ENCODE measurements at regions of chr7 and their contacts with region 1.

Region 1: DNA sequence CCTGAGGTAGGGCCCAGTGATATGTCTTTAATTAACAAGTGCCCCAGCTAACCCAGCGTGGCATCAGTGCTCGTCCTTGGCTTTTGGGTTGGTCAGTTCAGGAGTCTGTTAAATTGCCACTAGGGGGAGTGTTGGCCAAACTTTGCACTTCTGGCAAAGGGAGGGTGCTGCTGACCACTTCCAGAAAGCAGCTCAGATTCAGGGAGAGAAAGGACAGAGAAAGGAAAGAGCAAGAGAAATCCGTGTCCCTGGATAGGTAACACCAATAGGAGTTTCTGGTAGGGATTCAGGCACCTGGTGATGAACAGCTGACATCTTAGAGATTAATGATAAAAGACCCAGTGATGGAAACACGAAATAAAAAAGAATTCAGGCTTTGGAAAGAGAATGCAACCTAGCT is 243.1 kb upstream of the AOAH start:
- DNase-seq: peak; percentile 57 to 85
- H3K4me3 ChIP-seq: no peak overlapping the region
- H3K27ac ChIP-seq: no peak overlapping the region
- H3K4me1 ChIP-seq: peaks cover 32 to 57% (median 49%) of the 10 kb centered on the region in 4 donors
- H3K27me3 ChIP-seq: no peaks in the 10 kb centered on the region
- CTCF ChIP-seq: peak in 5 of 7 experiments; percentile 67 to 81 (median 74)
- EP300 ChIP-seq: no peak
- POLR2A ChIP-seq: no peak

Region 2: DNA sequence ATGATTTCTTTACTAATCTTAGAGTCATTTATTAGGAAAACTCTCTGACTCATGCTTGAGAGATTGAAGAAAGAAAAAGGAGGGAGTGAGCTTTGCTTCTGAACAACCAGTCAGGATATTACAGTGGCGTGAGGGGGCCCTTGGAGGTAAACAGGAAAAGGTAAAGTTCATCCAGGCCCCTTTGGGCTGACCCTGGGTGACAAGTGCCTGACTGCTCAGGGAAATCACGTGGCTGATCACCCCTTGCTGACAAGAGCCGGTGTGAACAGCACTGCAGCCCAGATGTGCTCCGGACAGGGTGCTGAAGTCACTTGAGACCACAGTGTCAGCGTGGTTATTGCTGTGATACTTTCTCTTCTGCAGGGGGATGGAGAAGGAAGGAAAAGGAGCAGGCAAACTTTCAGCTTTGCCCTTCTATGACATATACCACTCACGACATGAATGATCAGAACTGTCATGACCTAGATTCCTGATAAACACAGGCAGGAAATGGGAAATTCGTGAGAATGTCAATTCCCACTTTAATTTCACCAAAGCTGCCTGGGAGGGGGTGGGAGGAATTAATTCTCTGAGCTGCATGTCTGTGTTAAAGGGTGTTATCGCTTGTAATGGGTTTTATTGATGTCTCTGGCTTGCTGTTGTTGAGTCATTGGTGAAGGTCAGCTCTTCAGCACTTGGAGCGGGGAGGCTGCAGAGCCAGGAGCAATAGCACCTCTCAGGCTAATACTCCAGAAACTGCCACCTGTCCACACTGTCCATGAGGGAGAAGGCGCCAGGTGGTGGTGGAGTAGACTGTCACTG is 103.3 kb before region 1 on chr7:
- intact Hi-C with region 1: no loop called
- DNase-seq: peak in 1 of 2 donors; percentile 48
- H3K4me3 ChIP-seq: no peak overlapping the region
- H3K27ac ChIP-seq: no peak overlapping the region
- H3K4me1 ChIP-seq: no peaks in the 10 kb centered on the region
- H3K27me3 ChIP-seq: no peaks in the 10 kb centered on the region
- CTCF ChIP-seq: no peak
- EP300 ChIP-seq: no peak
- POLR2A ChIP-seq: no peak

Region 3: DNA sequence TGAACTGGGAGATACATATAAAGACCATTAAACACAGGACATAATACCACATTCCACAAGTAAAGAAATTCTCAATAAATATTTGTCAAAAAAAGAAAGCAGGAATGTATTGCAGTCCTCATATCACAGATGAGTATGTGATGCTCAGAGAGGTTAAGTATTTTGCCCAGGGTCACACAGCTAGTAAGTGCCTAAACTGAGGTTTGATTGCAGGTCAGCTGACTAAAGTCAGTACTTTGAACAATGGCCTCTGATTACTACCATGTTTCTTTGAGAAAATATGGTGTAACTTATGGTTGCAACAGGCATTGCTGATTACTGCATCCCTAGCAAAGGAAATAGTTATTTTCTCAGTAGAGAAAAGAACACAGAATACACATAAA is 214.2 kb after region 1 on chr7:
- intact Hi-C with region 1: loop called (anchors 10 kb)
- DNase-seq: no peak
- H3K4me3 ChIP-seq: no peak overlapping the region
- H3K27ac ChIP-seq: no peak overlapping the region
- H3K4me1 ChIP-seq: peaks cover 0 to 23% (median 11%) of the 10 kb centered on the region in 4 donors
- H3K27me3 ChIP-seq: no peaks in the 10 kb centered on the region
- CTCF ChIP-seq: no peak
- EP300 ChIP-seq: no peak
- POLR2A ChIP-seq: no peak

Measured in stomach (tissue), 19 donors.